HepG2 (cell line): ENCODE measurements at regions of chr13 and their contacts with region 1.

Region 1: DNA sequence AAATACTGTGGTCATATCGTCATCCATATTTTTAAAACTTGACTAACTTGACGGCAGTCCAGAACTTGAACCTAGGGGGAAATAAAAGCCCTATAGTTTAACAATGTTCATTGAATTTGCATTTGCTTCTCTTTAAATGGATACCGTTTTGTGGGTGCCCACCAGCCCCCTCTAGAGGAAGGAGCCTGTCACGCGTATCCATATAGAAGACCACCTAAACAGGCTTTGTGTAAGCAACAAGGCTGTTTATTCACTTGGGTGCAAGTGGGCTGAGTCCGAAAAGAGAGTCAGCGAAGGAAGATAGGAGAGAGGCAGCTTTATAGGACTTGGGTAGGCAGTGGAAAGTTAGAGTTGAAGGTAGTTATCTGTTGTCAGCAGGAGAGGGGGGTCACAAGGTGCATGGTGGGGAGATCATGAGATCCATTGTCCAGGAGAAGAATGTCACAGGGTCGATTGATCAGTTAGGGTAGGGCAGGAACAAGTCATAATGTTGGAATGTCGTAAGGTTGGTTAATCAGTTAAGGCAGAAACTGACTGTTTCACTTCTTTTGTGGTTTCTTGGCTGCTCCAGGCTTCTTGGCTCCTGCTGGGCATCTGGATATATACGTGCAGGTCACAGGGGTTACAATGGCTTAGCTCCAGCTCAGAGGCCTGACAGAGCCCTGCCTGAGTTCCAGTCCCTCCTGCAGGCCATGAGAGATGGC is 42.5 kb upstream of the ANKRD10 start:
- DNase-seq: peak; percentile 7
- ATAC-seq: no peak
- H3K4me3 ChIP-seq: no peak overlapping the region
- H3K27ac ChIP-seq: no peak overlapping the region
- H3K4me1 ChIP-seq: no peaks in the 10 kb centered on the region
- H3K27me3 ChIP-seq: no peaks in the 10 kb centered on the region
- CTCF ChIP-seq: no peak
- EP300 ChIP-seq: no peak
- POLR2A ChIP-seq: no peak
- RAD21 ChIP-seq: no peak

Region 2: DNA sequence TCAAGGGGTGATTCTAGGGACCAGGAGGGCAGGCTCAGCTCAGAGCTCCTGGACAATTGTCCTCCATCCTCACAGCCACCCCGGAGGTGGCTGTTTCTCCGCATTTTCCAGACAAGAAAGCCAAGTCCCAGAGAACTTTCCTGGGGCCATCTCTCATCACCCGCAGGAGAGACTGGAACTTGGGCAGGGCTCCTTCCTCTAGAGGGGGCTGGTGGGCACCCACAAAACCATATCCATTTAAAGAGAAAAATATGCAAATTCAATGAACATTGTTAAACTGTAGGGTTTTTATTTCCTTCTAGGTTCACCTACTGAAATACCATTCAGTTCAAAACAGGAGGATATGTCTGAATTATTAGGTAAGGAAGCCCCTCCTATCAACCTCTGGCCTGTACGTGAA is 1435.4 kb after region 1 on chr13:
- CTCF ChIA-PET with region 1: no interaction called
- POLR2A ChIA-PET with region 1: no interaction called
- in situ Hi-C with region 1: loop called (anchors 10 kb)
- intact Hi-C with region 1: no loop called
- DNase-seq: no peak
- ATAC-seq: no peak; the same call in 2 of the 3 replicates
- H3K4me3 ChIP-seq: no peak overlapping the region
- H3K27ac ChIP-seq: no peak overlapping the region
- H3K4me1 ChIP-seq: no peaks in the 10 kb centered on the region
- H3K27me3 ChIP-seq: peaks cover 10 to 42% of the 10 kb centered on the region in 2 experiments; a peak in 4 of 5 replicates
- CTCF ChIP-seq: no peak
- EP300 ChIP-seq: no peak
- POLR2A ChIP-seq: no peak
- RAD21 ChIP-seq: no peak